OCI-LY7 (cell line): ENCODE measurements at regions of chr1 and their contacts with region 1.

Region 1: DNA sequence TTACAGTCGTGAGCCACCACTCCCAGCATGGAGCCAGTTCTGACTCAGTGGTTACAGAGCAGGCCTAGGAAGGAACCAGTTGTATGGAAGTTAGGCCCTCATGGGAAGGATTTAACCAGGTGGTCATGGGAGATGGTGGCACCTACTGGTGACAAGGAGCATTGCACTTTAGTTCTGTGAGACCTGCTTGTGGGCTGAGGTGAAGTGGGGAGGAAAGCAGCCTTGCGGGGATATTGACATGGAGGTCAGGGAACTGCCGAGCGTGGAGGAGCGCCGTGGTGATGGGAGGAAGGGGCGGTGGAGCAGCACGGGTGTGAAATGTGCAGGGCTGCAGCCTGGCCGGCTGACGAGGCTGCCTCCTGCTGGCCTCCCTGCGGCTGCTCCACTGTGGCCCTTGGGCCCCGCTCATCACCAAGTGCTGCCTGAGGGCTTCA is 100.4 kb downstream of the GALNT2 start:
- DNase-seq: peak; percentile 79
- H3K4me3 ChIP-seq: no peak overlapping the region
- H3K27ac ChIP-seq: no peak overlapping the region
- H3K4me1 ChIP-seq: peaks cover 42% of the 10 kb centered on the region
- CTCF ChIP-seq: peak; percentile 92

Region 2: DNA sequence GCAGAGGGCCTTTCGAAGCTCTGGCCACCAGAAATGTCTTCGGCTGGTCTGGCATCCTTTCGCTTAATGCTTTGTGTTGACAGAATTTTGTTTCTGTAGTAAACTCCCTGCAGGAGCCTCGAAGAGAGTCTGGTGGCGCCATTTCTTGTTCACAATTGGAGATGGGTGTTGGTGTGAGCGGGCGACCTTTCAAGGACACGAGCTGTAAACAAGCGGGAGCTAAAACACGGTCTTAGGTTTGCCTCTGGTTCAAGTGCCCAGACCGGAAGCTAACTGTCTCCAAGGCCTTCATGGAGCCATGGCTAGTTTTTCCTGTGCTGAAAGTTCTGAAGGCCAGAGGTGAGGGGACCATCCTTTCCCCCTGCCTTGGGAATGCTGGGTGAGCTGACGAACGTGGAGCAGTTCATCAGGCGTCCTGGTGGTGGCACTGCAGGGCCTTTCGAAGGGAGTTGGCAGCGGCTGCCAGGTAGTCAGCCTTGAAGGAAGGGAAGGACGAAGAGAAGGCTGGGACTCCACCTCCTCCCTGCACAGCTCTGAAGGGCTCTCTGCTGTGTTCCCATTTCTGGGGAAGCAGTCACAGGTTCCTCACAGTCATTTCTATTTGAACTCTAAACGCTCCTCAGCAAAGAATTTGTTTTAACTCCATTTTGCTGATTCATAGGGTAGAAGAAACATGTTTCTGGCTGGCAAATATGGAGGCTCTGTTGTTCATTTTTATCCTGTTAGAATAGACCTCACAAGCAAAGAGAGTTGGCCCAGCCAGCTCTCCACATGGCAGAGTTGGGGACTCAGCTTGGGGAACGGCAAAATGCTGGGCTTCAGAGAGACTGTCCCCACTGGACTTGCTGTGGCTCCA is 506.2 kb before region 1 on chr1:
- CTCF ChIA-PET with region 1: no interaction called
- POLR2A ChIA-PET with region 1: no interaction called
- intact Hi-C with region 1: loop called (anchors 5 kb)
- DNase-seq: peak; percentile 79
- H3K4me3 ChIP-seq: no peak overlapping the region
- H3K27ac ChIP-seq: no peak overlapping the region
- H3K4me1 ChIP-seq: peaks cover 29% of the 10 kb centered on the region
- CTCF ChIP-seq: peak; percentile 94

Region 3: GRCh38 chr1:229856009-229856650 is 311.3 kb before region 1 on chr1:
- CTCF ChIA-PET with region 1: no interaction called
- POLR2A ChIA-PET with region 1: no interaction called
- intact Hi-C with region 1: loop called (anchors 10 kb)
- DNase-seq: peak; percentile 87
- H3K4me3 ChIP-seq: peak overlapping the region; percentile 56
- H3K27ac ChIP-seq: peak overlapping the region; percentile 65
- H3K4me1 ChIP-seq: peaks cover 15% of the 10 kb centered on the region
- CTCF ChIP-seq: no peak

Region 4: DNA sequence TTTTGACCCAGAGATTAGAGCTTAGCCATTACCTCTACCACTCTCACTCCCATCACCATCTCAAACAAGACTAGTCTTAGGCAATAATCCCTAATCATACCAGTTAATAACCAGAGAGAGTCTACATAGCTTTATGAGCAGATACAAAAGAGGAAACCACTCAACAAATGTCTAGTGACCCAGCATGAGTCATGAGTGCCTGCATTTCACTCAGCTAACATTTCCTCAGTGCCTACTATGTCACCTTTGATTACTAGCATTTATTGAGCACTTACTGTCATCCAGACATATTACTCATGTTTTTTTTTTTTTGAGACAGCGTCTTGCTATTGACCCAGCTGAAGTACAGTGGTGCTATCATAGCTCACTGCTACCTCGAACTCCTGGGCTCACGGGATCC is 136.3 kb before region 1 on chr1:
- CTCF ChIA-PET with region 1: no interaction called
- POLR2A ChIA-PET with region 1: no interaction called
- intact Hi-C with region 1: no loop called
- DNase-seq: no peak
- H3K4me3 ChIP-seq: no peak overlapping the region
- H3K27ac ChIP-seq: no peak overlapping the region
- H3K4me1 ChIP-seq: no peaks in the 10 kb centered on the region
- CTCF ChIP-seq: no peak

Region 5: GRCh38 chr1:230109895-230110667 is 57.4 kb before region 1 on chr1:
- CTCF ChIA-PET with region 1: no interaction called
- POLR2A ChIA-PET with region 1: interaction called, 3 read pairs
- intact Hi-C with region 1: loop called (anchors 1 kb)
- DNase-seq: peak; percentile 88
- H3K4me3 ChIP-seq: peak overlapping the region; percentile 25
- H3K27ac ChIP-seq: peak overlapping the region; percentile 79
- H3K4me1 ChIP-seq: peaks cover 80% of the 10 kb centered on the region
- CTCF ChIP-seq: peak; percentile 61

Region 6: GRCh38 chr1:230149751-230150584 is 17.5 kb before region 1 on chr1:
- CTCF ChIA-PET with region 1: no interaction called
- POLR2A ChIA-PET with region 1: interaction called, 10 read pairs
- intact Hi-C with region 1: no loop called
- DNase-seq: peak; percentile 82
- H3K4me3 ChIP-seq: peak overlapping the region; percentile 59
- H3K27ac ChIP-seq: peak overlapping the region; percentile 95
- H3K4me1 ChIP-seq: peaks cover 68% of the 10 kb centered on the region
- CTCF ChIP-seq: peak; percentile 41; the same call in 1 of the 2 replicates